ENCODE measurements at regions of chr19 and their contacts with region 1.

Region 1: GRCh38 chr19:37506387-37507166 is at the start of gene ZNF793:
- DNase-seq: peak; percentile 33 to 88 (median 83)
- ATAC-seq: peak; percentile 90
- H3K4me3 ChIP-seq: peak within 1 kb of the TSS; percentile 83
- H3K4me3 Mint-ChIP-seq: no peak within 1 kb of the TSS
- H3K27ac ChIP-seq: peak within 1 kb of the TSS; percentile 90
- H3K27ac Mint-ChIP-seq: no peak within 1 kb of the TSS
- H3K4me1 ChIP-seq: peaks cover 0 to 14% of the 10 kb centered on the region in 2 donors
- H3K4me1 Mint-ChIP-seq: peaks cover 0 to 2% (median 0%) of the 10 kb centered on the region in 7 donors
- H3K27me3 ChIP-seq: no peaks in the 10 kb centered on the region
- H3K27me3 Mint-ChIP-seq: peaks cover 0 to 5% (median 0%) of the 10 kb centered on the region in 5 donors
- total RNA-seq, gene ZNF793: 1.1 to 11.7 (median 6.0) TPM

Region 2: GRCh38 chr19:36378625-36379509 is 1127.7 kb before region 1 on chr19 and contains the start of gene ZFP14:
- CTCF ChIA-PET with region 1: no interaction called
- POLR2A ChIA-PET with region 1: no interaction called
- intact Hi-C with region 1: loop called in 1 of 2 experiments (anchors 10 kb)
- DNase-seq: peak; percentile 86 to 95 (median 93)
- ATAC-seq: peak; percentile 99
- H3K4me3 ChIP-seq: peak within 1 kb of the TSS; percentile 86
- H3K4me3 Mint-ChIP-seq: peak within 1 kb of the TSS; percentile 82 to 98 (median 94)
- H3K27ac ChIP-seq: peak within 1 kb of the TSS; percentile 86
- H3K27ac Mint-ChIP-seq: peak within 1 kb of the TSS; percentile 55 to 98 (median 94)
- H3K4me1 ChIP-seq: peaks cover 0 to 10% of the 10 kb centered on the region in 2 donors
- H3K4me1 Mint-ChIP-seq: peaks cover 9 to 23% (median 21%) of the 10 kb centered on the region in 7 donors
- H3K27me3 ChIP-seq: no peaks in the 10 kb centered on the region
- H3K27me3 Mint-ChIP-seq: no peaks in the 10 kb centered on the region
- total RNA-seq, gene ZFP14: 5.3 to 24.0 (median 9.2) TPM

Region 3: GRCh38 chr19:36605101-36605876 is 901.3 kb before region 1 on chr19 and contains the start of gene ZNF382:
- CTCF ChIA-PET with region 1: no interaction called
- POLR2A ChIA-PET with region 1: no interaction called
- intact Hi-C with region 1: loop called in 1 of 2 experiments (anchors 2 kb)
- DNase-seq: peak; percentile 77 to 92 (median 86)
- ATAC-seq: peak; percentile 80
- H3K4me3 ChIP-seq: peak within 1 kb of the TSS; percentile 95
- H3K4me3 Mint-ChIP-seq: peak within 1 kb of the TSS; percentile 81 to 99 (median 93)
- H3K27ac ChIP-seq: peak within 1 kb of the TSS; percentile 84
- H3K27ac Mint-ChIP-seq: peak within 1 kb of the TSS; percentile 78 to 98 (median 93)
- H3K4me1 ChIP-seq: peaks cover 7 to 15% of the 10 kb centered on the region in 2 donors
- H3K4me1 Mint-ChIP-seq: peaks cover 20 to 32% (median 27%) of the 10 kb centered on the region in 7 donors
- H3K27me3 ChIP-seq: no peaks in the 10 kb centered on the region
- H3K27me3 Mint-ChIP-seq: no peaks in the 10 kb centered on the region
- total RNA-seq, gene ZNF382: 5.4 to 20.2 (median 12.2) TPM

Region 4: GRCh38 chr19:36973021-36973843 is 533.3 kb before region 1 on chr19:
- CTCF ChIA-PET with region 1: no interaction called
- POLR2A ChIA-PET with region 1: no interaction called
- intact Hi-C with region 1: loop called in 1 of 2 experiments (anchors 5 kb)
- DNase-seq: peak; percentile 56 to 84 (median 73)
- ATAC-seq: peak; percentile 96
- H3K4me3 ChIP-seq: peak overlapping the region; percentile 100
- H3K4me3 Mint-ChIP-seq: peak overlapping the region; percentile 92 to 99 (median 97)
- H3K27ac ChIP-seq: peak overlapping the region; percentile 75
- H3K27ac Mint-ChIP-seq: peak overlapping the region; percentile 83 to 97 (median 92)
- H3K4me1 ChIP-seq: peaks cover 5 to 15% of the 10 kb centered on the region in 2 donors
- H3K4me1 Mint-ChIP-seq: peaks cover 9 to 22% (median 13%) of the 10 kb centered on the region in 7 donors
- H3K27me3 ChIP-seq: no peaks in the 10 kb centered on the region
- H3K27me3 Mint-ChIP-seq: no peaks in the 10 kb centered on the region

Region 5: GRCh38 chr19:37334179-37335071 is 172.2 kb before region 1 on chr19:
- CTCF ChIA-PET with region 1: no interaction called
- POLR2A ChIA-PET with region 1: interaction called, 3 read pairs
- intact Hi-C with region 1: loop called in 1 of 2 experiments (anchors 5 kb)
- DNase-seq: peak; percentile 52 to 93 (median 84)
- ATAC-seq: peak; percentile 99
- H3K4me3 ChIP-seq: peak overlapping the region; percentile 69
- H3K4me3 Mint-ChIP-seq: peak overlapping the region; percentile 82 to 93 (median 90)
- H3K27ac ChIP-seq: peak overlapping the region; percentile 88
- H3K27ac Mint-ChIP-seq: peak overlapping the region; percentile 77 to 97 (median 93)
- H3K4me1 ChIP-seq: peaks cover 6 to 10% of the 10 kb centered on the region in 2 donors
- H3K4me1 Mint-ChIP-seq: peaks cover 9 to 47% (median 33%) of the 10 kb centered on the region in 7 donors
- H3K27me3 ChIP-seq: no peaks in the 10 kb centered on the region
- H3K27me3 Mint-ChIP-seq: no peaks in the 10 kb centered on the region

Region 6: GRCh38 chr19:37691881-37692504 is 185.4 kb after region 1 on chr19:
- CTCF ChIA-PET with region 1: no interaction called
- POLR2A ChIA-PET with region 1: interaction called, 3 read pairs
- intact Hi-C with region 1: loop called in 1 of 2 experiments (anchors 1 kb)
- DNase-seq: peak; percentile 52 to 83 (median 73)
- ATAC-seq: peak; percentile 97
- H3K4me3 ChIP-seq: peak overlapping the region; percentile 95
- H3K4me3 Mint-ChIP-seq: peak overlapping the region; percentile 83 to 98 (median 96)
- H3K27ac ChIP-seq: peak overlapping the region; percentile 82
- H3K27ac Mint-ChIP-seq: peak overlapping the region; percentile 69 to 98 (median 96)
- H3K4me1 ChIP-seq: peaks cover 0 to 4% of the 10 kb centered on the region in 2 donors
- H3K4me1 Mint-ChIP-seq: peaks cover 5 to 17% (median 11%) of the 10 kb centered on the region in 7 donors
- H3K27me3 ChIP-seq: no peaks in the 10 kb centered on the region
- H3K27me3 Mint-ChIP-seq: no peaks in the 10 kb centered on the region

Measured in naive thymus-derived CD4-positive, alpha-beta T cell (primary cell).